ENCODE measurements at regions of chr11 and their contacts with region 1.

Region 1: DNA sequence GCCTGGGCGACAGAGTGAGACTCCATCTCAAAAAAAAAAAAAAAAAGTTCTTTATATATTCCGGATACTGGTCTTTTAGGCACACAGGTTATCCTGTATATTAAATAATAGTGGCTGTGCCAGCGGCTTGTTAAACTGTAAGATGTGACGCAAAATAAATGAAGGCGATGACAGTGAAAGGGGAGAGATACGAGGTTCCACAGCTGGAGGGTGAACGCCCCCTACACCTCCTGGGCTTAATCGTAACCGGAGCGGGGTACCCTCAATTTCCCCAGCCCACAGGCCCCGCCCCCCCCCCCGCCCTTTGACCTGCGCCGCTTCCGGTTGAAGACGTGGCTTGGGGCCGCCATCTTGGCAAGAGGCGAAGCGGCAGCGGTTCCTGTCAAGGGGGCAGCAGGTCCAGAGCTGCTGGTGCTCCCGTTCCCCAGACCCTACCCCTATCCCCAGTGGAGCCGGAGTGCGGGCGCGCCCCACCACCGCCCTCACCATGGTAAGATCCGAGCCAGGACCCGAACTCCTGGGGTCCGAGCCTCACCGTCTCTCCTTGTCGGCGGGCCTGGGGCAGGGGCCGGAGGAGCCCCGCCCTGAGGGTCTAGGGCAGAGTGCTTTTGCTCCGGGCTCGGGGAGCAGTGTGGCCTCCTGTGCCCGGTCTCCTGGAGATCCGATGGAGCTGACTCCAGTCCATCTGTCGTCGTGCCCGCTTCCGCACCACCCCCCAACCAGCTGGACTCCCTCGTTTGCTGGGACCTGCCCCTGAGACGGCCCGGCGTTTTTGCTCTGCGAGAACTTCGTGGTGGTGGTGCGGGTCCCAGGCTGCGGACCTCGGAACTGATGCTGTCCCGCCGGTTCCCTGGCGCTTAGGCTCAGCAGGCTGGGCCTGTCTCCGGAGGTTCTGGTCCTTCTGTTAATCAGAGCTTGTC is at the start of gene ARCN1:
- DNase-seq: peak; percentile 84
- H3K4me3 Mint-ChIP-seq: peak within 1 kb of the TSS; percentile 91
- H3K27ac Mint-ChIP-seq: peak within 1 kb of the TSS; percentile 94
- H3K4me1 Mint-ChIP-seq: peaks cover 54% of the 10 kb centered on the region
- H3K27me3 Mint-ChIP-seq: no peaks in the 10 kb centered on the region
- total RNA-seq, gene ARCN1: 159 to 174 TPM

Region 2: GRCh38 chr11:118206391-118207031 is 365.8 kb before region 1 on chr11:
- CTCF ChIA-PET with region 1: no interaction called
- intact Hi-C with region 1: loop called (anchors 5 kb)
- DNase-seq: no peak
- H3K4me3 Mint-ChIP-seq: peak overlapping the region; percentile 11
- H3K27ac Mint-ChIP-seq: peak overlapping the region; percentile 88
- H3K4me1 Mint-ChIP-seq: peaks cover 32% of the 10 kb centered on the region
- H3K27me3 Mint-ChIP-seq: no peaks in the 10 kb centered on the region

Region 3: GRCh38 chr11:118359295-118359958 is 212.9 kb before region 1 on chr11 and contains the start of gene UBE4A:
- CTCF ChIA-PET with region 1: no interaction called
- intact Hi-C with region 1: loop called (anchors 2 kb)
- DNase-seq: peak; percentile 100
- H3K4me3 Mint-ChIP-seq: peak within 1 kb of the TSS; percentile 99
- H3K27ac Mint-ChIP-seq: peak within 1 kb of the TSS; percentile 91
- H3K4me1 Mint-ChIP-seq: peaks cover 52% of the 10 kb centered on the region
- H3K27me3 Mint-ChIP-seq: no peaks in the 10 kb centered on the region
- total RNA-seq, gene UBE4A: 35.3 to 35.7 TPM

Region 4: GRCh38 chr11:118488480-118489109 is 83.7 kb before region 1 on chr11:
- CTCF ChIA-PET with region 1: no interaction called
- intact Hi-C with region 1: loop called (anchors 2 kb)
- DNase-seq: peak; percentile 92
- H3K4me3 Mint-ChIP-seq: no peak overlapping the region
- H3K27ac Mint-ChIP-seq: no peak overlapping the region
- H3K4me1 Mint-ChIP-seq: peaks cover 9% of the 10 kb centered on the region
- H3K27me3 Mint-ChIP-seq: no peaks in the 10 kb centered on the region

Region 5: DNA sequence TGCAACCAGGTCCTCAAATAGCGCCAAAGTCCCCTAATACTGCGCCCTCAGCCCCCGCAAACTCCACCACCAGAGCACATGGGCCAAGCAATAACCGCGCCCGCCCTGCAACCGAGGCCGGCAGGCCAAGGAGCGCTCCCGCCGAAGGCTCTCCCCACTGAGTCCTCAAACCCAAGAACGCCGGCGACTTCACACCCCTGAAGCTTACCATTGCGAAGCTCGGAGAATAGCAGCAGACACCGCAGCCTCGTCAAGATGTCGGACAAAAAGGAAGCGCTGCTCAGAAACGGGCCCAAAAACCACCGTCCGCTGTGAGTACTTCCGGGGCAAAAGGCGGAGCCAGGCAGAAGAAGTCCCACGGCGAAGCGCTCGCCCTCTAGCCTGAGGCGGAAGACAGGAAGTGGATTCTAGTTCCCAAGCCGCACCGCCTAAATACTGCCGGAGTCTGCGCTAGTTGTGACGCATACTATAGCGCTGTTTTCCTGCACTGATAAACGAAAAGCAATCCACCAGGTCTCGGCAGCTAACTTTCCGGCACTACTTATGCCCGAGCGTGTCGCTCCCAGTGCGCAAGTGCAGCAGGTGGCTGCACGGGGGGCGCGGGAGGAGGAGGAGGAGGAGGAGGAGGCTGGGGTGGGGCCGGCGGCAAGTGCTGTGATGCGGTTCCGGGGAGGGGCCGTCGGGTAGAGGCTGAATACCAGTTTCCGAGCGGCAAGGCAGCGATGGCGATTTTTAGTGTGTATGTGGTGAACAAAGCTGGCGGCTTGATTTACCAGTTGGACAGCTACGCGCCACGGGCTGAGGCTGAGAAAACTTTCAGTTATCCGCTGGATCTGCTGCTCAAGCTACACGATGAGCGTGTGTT is 446.0 kb after region 1 on chr11 and contains the starts of genes RPS25 and TRAPPC4:
- CTCF ChIA-PET with region 1: no interaction called
- intact Hi-C with region 1: loop called (anchors 2 kb)
- DNase-seq: peak; percentile 98
- H3K4me3 Mint-ChIP-seq: peak within 1 kb of the TSS; percentile 98
- H3K27ac Mint-ChIP-seq: peak within 1 kb of the TSS; percentile 99
- H3K4me1 Mint-ChIP-seq: peaks cover 59% of the 10 kb centered on the region
- H3K27me3 Mint-ChIP-seq: no peaks in the 10 kb centered on the region
- total RNA-seq, gene RPS25: 2,183 to 2,206 TPM
- total RNA-seq, gene TRAPPC4: 66.4 to 69.9 TPM